Naive thymus-derived CD4-positive, alpha-beta T cell (primary cell): ENCODE measurements at regions of chr2 and their contacts with region 1.

Region 1: GRCh38 chr2:28250006-28250405 is 142.7 kb upstream of the FOSL2 start:
- DNase-seq: no peak
- ATAC-seq: no peak
- H3K4me3 ChIP-seq: no peak overlapping the region
- H3K4me3 Mint-ChIP-seq: peak overlapping the region in 2 of 10 donors; percentile 1 to 40
- H3K27ac ChIP-seq: no peak overlapping the region
- H3K27ac Mint-ChIP-seq: peak overlapping the region in 2 of 9 donors; percentile 7 to 66
- H3K4me1 ChIP-seq: peaks cover 13 to 22% of the 10 kb centered on the region in 2 donors
- H3K4me1 Mint-ChIP-seq: peaks cover 12 to 53% (median 33%) of the 10 kb centered on the region in 7 donors
- H3K27me3 ChIP-seq: no peaks in the 10 kb centered on the region
- H3K27me3 Mint-ChIP-seq: no peaks in the 10 kb centered on the region

Region 2: DNA sequence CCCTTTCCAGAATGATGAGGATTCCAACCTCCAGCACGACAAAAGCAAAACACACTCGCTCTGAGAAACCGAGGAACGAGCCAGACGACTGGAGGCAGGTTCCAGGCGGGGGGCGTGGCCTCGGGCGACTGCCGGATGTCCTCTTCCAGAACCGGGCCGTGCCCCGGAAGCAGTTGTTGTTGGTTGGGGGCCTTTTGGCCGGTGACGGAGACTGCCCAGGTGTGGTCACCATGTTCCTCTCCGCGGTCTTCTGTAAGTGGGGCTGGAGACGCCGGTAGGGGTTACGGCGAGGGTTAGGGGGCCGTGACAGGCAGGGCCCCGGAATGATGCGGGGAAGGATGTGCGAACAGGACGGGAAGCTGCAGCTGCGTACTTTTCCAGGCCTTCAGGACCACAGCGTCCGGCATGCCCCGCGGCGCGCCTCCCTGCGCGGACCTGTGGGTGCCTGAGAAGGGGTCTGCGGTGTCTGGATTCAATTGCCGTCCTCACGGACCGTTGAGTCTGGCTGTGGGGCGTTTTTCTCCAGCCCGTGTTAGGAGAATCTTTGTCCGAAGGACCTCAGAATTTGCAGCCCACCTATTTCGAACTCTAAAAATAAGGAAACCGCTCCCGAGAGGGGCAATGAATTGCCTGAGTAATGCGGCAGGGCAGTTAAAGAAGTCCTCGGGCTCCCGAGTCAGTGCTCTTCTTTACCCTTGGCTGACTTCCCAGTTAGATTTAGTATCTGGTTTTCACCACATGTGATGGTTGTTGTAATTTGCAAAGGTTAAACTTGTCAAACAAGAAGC is 478.3 kb before region 1 on chr2 and contains the start of gene MRPL33:
- CTCF ChIA-PET with region 1: no interaction called
- POLR2A ChIA-PET with region 1: no interaction called
- intact Hi-C with region 1: loop called in 1 of 2 experiments (anchors 5 kb)
- DNase-seq: peak; percentile 85 to 92 (median 89)
- ATAC-seq: peak; percentile 97
- H3K4me3 ChIP-seq: peak within 1 kb of the TSS; percentile 92
- H3K4me3 Mint-ChIP-seq: peak within 1 kb of the TSS; percentile 96 to 100 (median 99)
- H3K27ac ChIP-seq: peak within 1 kb of the TSS; percentile 92
- H3K27ac Mint-ChIP-seq: peak within 1 kb of the TSS; percentile 97 to 100 (median 100)
- H3K4me1 ChIP-seq: peaks cover 10 to 20% of the 10 kb centered on the region in 2 donors
- H3K4me1 Mint-ChIP-seq: peaks cover 32 to 59% (median 52%) of the 10 kb centered on the region in 7 donors
- H3K27me3 ChIP-seq: no peaks in the 10 kb centered on the region
- H3K27me3 Mint-ChIP-seq: peaks cover 0 to 8% (median 0%) of the 10 kb centered on the region in 5 donors
- total RNA-seq, gene MRPL33: 27.3 to 39.4 (median 35.1) TPM

Region 3: DNA sequence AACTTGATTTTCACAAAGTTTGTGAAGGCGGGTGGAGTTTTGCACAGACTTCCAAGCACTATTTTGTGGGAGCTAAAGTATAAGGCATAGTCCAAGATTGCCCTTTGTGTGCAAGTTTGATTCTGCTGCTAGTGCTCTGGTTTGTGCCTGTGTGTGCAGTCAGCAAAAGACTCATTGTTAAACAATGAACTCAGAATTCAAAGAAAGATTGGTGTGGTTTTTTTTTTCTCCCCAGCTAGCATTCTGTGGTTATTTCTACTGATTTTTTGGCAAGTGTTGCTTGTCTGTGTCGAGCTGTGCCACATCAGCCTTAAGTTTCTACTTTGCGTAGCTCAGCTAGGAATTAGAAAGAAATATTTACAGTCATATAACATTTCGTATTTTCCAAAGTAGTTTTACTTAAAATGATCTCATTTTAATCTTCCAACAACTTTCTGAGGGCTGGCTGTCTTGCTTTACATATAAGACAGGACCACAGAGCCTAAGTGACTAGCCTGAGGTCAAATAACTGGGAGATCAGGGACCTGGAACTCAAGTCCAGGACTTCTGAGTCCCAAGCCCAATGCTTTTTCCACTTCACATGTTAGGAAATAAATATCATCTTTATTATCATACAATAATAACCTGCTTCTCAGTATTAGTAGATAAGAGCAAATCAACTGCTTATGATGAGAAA is 289.6 kb before region 1 on chr2:
- CTCF ChIA-PET with region 1: no interaction called
- POLR2A ChIA-PET with region 1: no interaction called
- intact Hi-C with region 1: loop called in 1 of 2 experiments (anchors 10 kb)
- DNase-seq: peak in 5 of 9 donors; percentile 3 to 31 (median 22)
- ATAC-seq: peak; percentile 54
- H3K4me3 ChIP-seq: no peak overlapping the region
- H3K4me3 Mint-ChIP-seq: peak overlapping the region in 7 of 10 donors; percentile 5 to 71 (median 46)
- H3K27ac ChIP-seq: no peak overlapping the region
- H3K27ac Mint-ChIP-seq: peak overlapping the region in 5 of 9 donors; percentile 7 to 83 (median 52)
- H3K4me1 ChIP-seq: peaks cover 22 to 28% of the 10 kb centered on the region in 2 donors
- H3K4me1 Mint-ChIP-seq: peaks cover 25 to 77% (median 63%) of the 10 kb centered on the region in 7 donors
- H3K27me3 ChIP-seq: no peaks in the 10 kb centered on the region
- H3K27me3 Mint-ChIP-seq: no peaks in the 10 kb centered on the region

Region 4: GRCh38 chr2:28271231-28271918 is 21.4 kb after region 1 on chr2:
- CTCF ChIA-PET with region 1: no interaction called
- POLR2A ChIA-PET with region 1: interaction called, 3 read pairs
- intact Hi-C with region 1: loop called in 1 of 2 experiments (anchors 2 kb)
- DNase-seq: no peak
- ATAC-seq: no peak
- H3K4me3 ChIP-seq: no peak overlapping the region
- H3K4me3 Mint-ChIP-seq: peak overlapping the region in 1 of 10 donors; percentile 75
- H3K27ac ChIP-seq: no peak overlapping the region
- H3K27ac Mint-ChIP-seq: peak overlapping the region in 1 of 9 donors; percentile 8
- H3K4me1 ChIP-seq: peaks cover 0 to 18% of the 10 kb centered on the region in 2 donors
- H3K4me1 Mint-ChIP-seq: peaks cover 0 to 57% (median 6%) of the 10 kb centered on the region in 7 donors
- H3K27me3 ChIP-seq: no peaks in the 10 kb centered on the region
- H3K27me3 Mint-ChIP-seq: no peaks in the 10 kb centered on the region

Region 5: GRCh38 chr2:28359222-28360065 is 109.4 kb after region 1 on chr2:
- CTCF ChIA-PET with region 1: no interaction called
- POLR2A ChIA-PET with region 1: no interaction called
- intact Hi-C with region 1: loop called in 1 of 2 experiments (anchors 2 kb)
- DNase-seq: peak; percentile 58 to 87 (median 82)
- ATAC-seq: peak; percentile 86
- H3K4me3 ChIP-seq: peak overlapping the region; percentile 42
- H3K4me3 Mint-ChIP-seq: peak overlapping the region; percentile 76 to 95 (median 84)
- H3K27ac ChIP-seq: peak overlapping the region; percentile 5
- H3K27ac Mint-ChIP-seq: peak overlapping the region; percentile 34 to 96 (median 93)
- H3K4me1 ChIP-seq: peaks cover 36 to 43% of the 10 kb centered on the region in 2 donors
- H3K4me1 Mint-ChIP-seq: peaks cover 34 to 68% (median 38%) of the 10 kb centered on the region in 7 donors
- H3K27me3 ChIP-seq: no peaks in the 10 kb centered on the region
- H3K27me3 Mint-ChIP-seq: peaks cover 0 to 14% (median 0%) of the 10 kb centered on the region in 5 donors

Region 6: DNA sequence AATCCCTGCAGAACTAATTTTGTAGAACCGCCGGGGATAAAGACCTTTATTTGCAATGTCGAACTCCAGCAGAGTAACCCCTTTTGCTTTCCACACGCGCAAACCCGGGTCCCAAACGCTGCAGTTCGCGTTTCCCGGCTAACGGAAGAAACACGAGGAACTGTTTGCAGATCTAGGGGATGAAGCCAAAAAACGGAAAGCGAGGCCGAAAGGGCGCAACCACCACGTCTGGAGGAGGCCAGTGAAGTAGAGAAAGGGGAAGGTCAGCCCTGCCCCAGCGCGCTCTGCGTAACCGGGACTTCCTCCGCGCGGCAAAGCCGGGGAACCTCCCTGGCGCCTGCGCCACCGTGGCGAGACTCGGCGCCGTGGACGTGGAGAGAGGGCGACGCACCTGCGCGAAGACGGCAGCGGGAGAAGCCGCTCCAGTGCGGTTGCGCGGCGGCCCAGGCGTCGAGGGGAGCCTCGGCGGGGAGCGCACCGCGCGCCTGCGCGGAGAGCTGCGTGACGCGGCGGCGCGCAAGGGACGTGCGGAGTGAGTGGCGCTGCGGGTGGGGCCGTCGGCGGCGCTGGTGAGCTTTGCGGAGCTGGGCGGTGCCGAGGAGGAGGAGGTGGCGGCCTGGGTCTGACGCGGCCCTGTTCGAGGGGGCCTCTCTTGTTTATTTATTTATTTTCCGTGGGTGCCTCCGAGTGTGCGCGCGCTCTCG is 501.4 kb after region 1 on chr2 and contains the start of gene PPP1CB:
- CTCF ChIA-PET with region 1: no interaction called
- POLR2A ChIA-PET with region 1: no interaction called
- intact Hi-C with region 1: no loop called
- DNase-seq: peak; percentile 95 to 99 (median 99)
- ATAC-seq: peak; percentile 92
- H3K4me3 ChIP-seq: peak within 1 kb of the TSS; percentile 97
- H3K4me3 Mint-ChIP-seq: peak within 1 kb of the TSS; percentile 93 to 100 (median 96)
- H3K27ac ChIP-seq: peak within 1 kb of the TSS; percentile 99
- H3K27ac Mint-ChIP-seq: peak within 1 kb of the TSS; percentile 96 to 99 (median 98)
- H3K4me1 ChIP-seq: peaks cover 42 to 44% of the 10 kb centered on the region in 2 donors
- H3K4me1 Mint-ChIP-seq: peaks cover 35 to 67% (median 64%) of the 10 kb centered on the region in 7 donors
- H3K27me3 ChIP-seq: no peaks in the 10 kb centered on the region
- H3K27me3 Mint-ChIP-seq: no peaks in the 10 kb centered on the region
- total RNA-seq, gene PPP1CB: 202 to 223 (median 210) TPM